Dendritic cell treated with granulocyte-macrophage colony-stimulating factor and Interleukin-4, amounts not matched to agents 40 ng/mL and 50 ng/mL, for 4 days (primary cell): ENCODE measurements at regions of chr17 and their contacts with region 1.

Region 1: GRCh38 chr17:77331301-77331864 is 190.6 kb downstream of the SEC14L1 start:
- H3K4me3 Mint-ChIP-seq: peak overlapping the region; percentile 69
- H3K27ac Mint-ChIP-seq: peak overlapping the region; percentile 77
- H3K4me1 Mint-ChIP-seq: peaks cover 72% of the 10 kb centered on the region
- H3K27me3 Mint-ChIP-seq: no peaks in the 10 kb centered on the region

Region 2: DNA sequence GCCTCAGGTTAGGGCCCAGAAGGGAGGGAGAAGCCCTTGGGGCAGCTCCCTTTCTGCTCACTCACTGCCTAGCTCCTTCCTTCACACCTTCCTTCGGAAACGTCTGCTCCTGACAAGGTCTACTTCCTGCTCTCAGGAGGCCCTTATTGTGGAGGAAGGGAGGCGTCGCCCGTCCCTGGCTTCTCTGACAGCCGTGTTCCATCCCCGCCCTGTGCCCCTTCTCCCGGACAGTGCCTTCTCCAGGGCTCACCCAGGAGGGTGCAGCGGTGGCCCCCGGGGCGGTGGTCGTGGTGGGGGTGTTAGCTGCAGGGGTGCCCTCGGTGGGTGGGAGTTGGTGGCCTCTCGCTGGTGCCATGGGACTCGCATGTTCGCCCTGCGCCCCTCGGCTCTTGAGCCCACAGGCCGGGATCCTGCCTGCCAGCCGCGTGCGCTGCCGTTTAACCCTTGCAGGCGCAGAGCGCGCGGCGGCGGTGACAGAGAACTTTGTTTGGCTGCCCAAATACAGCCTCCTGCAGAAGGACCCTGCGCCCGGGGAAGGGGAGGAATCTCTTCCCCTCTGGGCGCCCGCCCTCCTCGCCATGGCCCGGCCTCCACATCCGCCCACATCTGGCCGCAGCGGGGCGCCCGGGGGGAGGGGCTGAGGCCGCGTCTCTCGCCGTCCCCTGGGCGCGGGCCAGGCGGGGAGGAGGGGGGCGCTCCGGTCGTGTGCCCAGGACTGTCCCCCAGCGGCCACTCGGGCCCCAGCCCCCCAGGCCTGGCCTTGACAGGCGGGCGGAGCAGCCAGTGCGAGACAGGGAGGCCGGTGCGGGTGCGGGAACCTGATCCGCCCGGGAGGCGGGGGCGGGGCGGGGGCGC is 41.3 kb after region 1 on chr17:
- intact Hi-C with region 1: loop called (anchors 5 kb)
- H3K4me3 Mint-ChIP-seq: peak overlapping the region; percentile 70
- H3K27ac Mint-ChIP-seq: peak overlapping the region; percentile 58
- H3K4me1 Mint-ChIP-seq: peaks cover 83% of the 10 kb centered on the region
- H3K27me3 Mint-ChIP-seq: no peaks in the 10 kb centered on the region

Region 3: GRCh38 chr17:77382966-77383612 is 51.7 kb after region 1 on chr17:
- intact Hi-C with region 1: no loop called
- H3K4me3 Mint-ChIP-seq: no peak overlapping the region
- H3K27ac Mint-ChIP-seq: no peak overlapping the region
- H3K4me1 Mint-ChIP-seq: peaks cover 74% of the 10 kb centered on the region
- H3K27me3 Mint-ChIP-seq: no peaks in the 10 kb centered on the region

Region 4: DNA sequence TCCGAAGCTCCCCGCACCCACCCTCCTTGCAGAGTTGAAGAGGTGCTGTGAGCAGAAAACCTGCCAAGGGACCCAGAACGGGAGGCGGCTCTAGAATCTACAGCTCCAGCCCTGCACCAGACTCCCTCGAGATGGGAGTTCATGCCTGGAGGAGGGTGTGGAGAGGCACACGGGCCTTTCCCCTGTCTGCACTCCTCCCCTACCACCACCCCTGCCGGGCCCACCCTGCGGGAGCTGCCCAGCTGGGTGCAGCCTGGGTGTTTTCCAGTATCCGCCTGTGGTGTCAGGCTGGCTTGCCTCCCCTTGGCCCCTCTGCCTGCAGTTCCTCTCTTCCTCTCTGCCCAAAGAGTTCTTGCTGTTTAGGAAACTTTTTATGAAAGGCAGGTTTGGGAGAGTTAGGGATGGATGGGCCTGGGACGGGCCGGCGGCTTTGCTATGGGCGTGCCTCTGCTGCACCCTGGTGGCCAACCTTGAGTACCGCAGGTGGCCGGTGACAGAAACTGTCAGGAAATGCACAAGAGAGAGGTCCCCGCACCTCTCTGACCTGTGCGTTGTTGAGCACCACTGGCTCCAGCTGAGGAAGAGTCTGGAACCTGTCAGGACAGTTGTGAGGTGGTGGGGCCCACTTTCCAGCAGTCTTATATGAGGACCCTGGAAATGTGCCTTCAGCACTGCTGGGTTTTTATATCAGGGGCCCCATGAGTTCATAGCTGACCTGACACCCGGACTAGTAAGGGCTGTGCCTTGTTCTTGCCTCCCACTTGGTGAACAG is 163.5 kb after region 1 on chr17:
- intact Hi-C with region 1: loop called (anchors 1 kb)
- H3K4me3 Mint-ChIP-seq: no peak overlapping the region
- H3K27ac Mint-ChIP-seq: no peak overlapping the region
- H3K4me1 Mint-ChIP-seq: peaks cover 35% of the 10 kb centered on the region
- H3K27me3 Mint-ChIP-seq: no peaks in the 10 kb centered on the region